CD14-positive monocyte (primary cell): ENCODE measurements at regions of chr1 and their contacts with region 1.

Region 1: GRCh38 chr1:111739194-111739924 is at the start of gene INKA2:
- DNase-seq: peak; percentile 80 to 86 (median 82)
- H3K4me3 ChIP-seq: peak within 1 kb of the TSS; percentile 46 to 79 (median 63)
- H3K4me3 Mint-ChIP-seq: peak within 1 kb of the TSS; percentile 89 to 98
- H3K27ac ChIP-seq: peak within 1 kb of the TSS; percentile 78 to 81
- H3K27ac Mint-ChIP-seq: peak within 1 kb of the TSS; percentile 83 to 99 (median 95)
- H3K4me1 ChIP-seq: peaks cover 58 to 62% of the 10 kb centered on the region in 2 donors
- H3K4me1 Mint-ChIP-seq: peaks cover 31% of the 10 kb centered on the region
- H3K27me3 ChIP-seq: peaks cover 22 to 54% of the 10 kb centered on the region in 2 donors
- H3K27me3 Mint-ChIP-seq: peaks cover 51 to 70% (median 54%) of the 10 kb centered on the region in 3 donors
- CTCF ChIP-seq: no peak
- polyA plus RNA-seq, gene INKA2: 1.8 to 6.6 (median 2.0) TPM

Region 2: DNA sequence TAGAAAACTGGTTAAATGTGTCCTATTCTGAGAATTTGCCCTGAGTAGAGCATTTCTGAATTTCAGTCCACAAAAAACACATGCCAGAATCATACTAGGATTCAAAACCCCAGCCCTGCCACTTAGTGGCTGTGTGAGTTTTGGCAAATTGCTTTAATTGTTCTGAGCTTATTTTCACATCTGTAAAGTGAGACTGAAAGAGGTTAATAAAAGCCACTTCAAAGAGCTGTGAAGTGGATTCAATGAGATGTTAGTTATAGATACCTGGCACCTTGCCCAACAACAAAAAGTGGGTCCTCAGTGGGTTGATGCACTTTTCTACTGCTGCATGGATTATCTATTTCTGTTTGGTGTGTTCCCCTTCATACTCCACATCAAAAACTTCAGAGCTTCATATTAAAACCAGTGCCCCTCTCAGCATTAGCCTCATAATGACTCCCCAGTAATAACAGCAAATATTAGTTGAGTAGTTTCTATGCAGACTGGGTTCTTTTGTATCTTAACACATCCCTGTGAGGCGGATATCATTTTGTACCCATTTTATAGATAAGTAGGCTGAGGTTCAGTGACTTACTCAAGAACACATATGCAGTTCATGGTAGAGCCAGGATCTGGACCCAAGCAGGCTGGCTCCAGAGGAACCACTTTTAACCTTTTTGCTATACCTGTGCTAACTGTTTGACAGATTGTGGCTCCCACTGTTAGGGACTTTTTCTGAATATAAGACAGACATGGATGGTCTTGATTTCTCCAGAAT is 221.7 kb before region 1 on chr1:
- intact Hi-C with region 1: no loop called
- DNase-seq: no peak
- H3K4me3 ChIP-seq: no peak overlapping the region
- H3K4me3 Mint-ChIP-seq: no peak overlapping the region
- H3K27ac ChIP-seq: no peak overlapping the region
- H3K27ac Mint-ChIP-seq: no peak overlapping the region
- H3K4me1 ChIP-seq: peaks cover 23 to 25% of the 10 kb centered on the region in 2 donors
- H3K4me1 Mint-ChIP-seq: peaks cover 29% of the 10 kb centered on the region
- H3K27me3 ChIP-seq: no peaks in the 10 kb centered on the region
- H3K27me3 Mint-ChIP-seq: peaks cover 0 to 5% (median 1%) of the 10 kb centered on the region in 3 donors
- CTCF ChIP-seq: no peak

Region 3: DNA sequence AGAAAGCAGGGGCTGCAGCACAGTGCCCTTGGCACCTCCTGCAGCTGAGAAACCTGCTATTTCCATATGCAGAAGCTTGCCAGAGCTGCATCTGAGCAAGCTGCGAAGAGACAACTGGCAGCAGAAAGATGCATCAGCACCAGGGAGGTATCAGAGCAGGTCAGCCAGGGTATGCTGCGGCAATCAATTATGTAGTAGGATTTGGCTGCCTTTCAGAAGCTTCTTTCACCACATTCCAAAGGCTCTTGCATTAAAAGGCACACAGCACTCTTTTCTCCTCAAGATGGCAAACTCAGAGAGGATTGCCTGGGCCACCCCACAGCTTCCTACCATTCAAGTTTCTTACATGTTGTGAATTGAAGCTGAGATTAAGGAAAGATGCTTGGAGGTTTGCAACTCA is 167.4 kb before region 1 on chr1:
- intact Hi-C with region 1: no loop called
- DNase-seq: no peak
- H3K4me3 ChIP-seq: no peak overlapping the region
- H3K4me3 Mint-ChIP-seq: no peak overlapping the region
- H3K27ac ChIP-seq: no peak overlapping the region
- H3K27ac Mint-ChIP-seq: peak overlapping the region in 1 of 7 donors; percentile 69
- H3K4me1 ChIP-seq: no peaks in the 10 kb centered on the region
- H3K4me1 Mint-ChIP-seq: no peaks in the 10 kb centered on the region
- H3K27me3 ChIP-seq: no peaks in the 10 kb centered on the region
- H3K27me3 Mint-ChIP-seq: peaks cover 0 to 1% (median 0%) of the 10 kb centered on the region in 3 donors
- CTCF ChIP-seq: no peak

Region 4: DNA sequence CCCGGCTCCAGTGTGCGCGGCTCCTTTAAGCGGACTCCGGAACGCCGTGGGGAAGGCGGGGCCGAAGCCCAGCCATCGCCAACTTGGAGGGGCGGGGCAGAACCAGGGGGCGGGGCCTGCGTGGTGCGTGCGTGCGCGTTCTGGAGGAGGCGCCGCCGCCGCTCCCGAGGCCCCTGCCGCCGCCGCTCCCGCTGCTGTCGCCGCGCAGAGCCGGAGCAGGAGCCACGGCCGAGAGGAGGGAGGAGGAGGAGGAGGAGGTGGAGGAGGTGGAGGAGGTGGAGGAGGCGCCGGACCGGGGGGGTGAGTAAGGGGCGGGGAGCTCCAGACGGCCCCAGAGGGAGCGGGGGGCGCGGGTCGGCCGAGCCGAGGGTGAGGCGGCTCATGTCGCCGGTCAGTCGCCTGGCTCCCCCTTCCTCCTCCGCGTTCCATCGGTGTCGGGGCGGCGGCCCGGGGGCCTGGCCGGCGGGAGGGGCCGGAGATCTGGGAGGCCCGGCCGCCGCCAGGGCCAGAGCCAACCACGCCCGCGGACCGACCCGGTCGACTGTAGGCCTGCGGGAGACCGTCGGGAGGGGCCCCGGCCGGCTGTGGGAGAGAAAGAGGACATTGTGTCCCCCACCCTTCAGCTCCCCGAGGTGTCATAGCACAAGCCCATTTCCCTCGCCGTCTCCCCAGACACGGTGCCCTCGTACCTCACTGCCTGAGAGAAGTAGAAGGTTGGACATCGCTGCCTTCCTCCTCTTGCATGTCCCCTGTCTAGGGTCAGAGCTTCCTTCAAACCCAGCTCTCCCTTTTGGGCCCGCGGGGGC is 119.5 kb before region 1 on chr1 and contains the start of gene RAP1A:
- intact Hi-C with region 1: loop called in 1 of 2 experiments (anchors 10 kb)
- DNase-seq: peak; percentile 82 to 86 (median 85)
- H3K4me3 ChIP-seq: peak within 1 kb of the TSS; percentile 65 to 89 (median 79)
- H3K4me3 Mint-ChIP-seq: peak within 1 kb of the TSS; percentile 79 to 96
- H3K27ac ChIP-seq: peak within 1 kb of the TSS; percentile 86 to 89
- H3K27ac Mint-ChIP-seq: peak within 1 kb of the TSS; percentile 93 to 98 (median 97)
- H3K4me1 ChIP-seq: peaks cover 58 to 70% of the 10 kb centered on the region in 2 donors
- H3K4me1 Mint-ChIP-seq: peaks cover 72% of the 10 kb centered on the region
- H3K27me3 ChIP-seq: no peaks in the 10 kb centered on the region
- H3K27me3 Mint-ChIP-seq: no peaks in the 10 kb centered on the region
- CTCF ChIP-seq: no peak
- polyA plus RNA-seq, gene RAP1A: 41.2 to 79.1 (median 75.3) TPM

Region 5: GRCh38 chr1:111725192-111725591 is 14.2 kb before region 1 on chr1:
- intact Hi-C with region 1: no loop called
- DNase-seq: no peak
- H3K4me3 ChIP-seq: no peak overlapping the region
- H3K4me3 Mint-ChIP-seq: no peak overlapping the region
- H3K27ac ChIP-seq: no peak overlapping the region
- H3K27ac Mint-ChIP-seq: no peak overlapping the region
- H3K4me1 ChIP-seq: peaks cover 5 to 18% of the 10 kb centered on the region in 2 donors
- H3K4me1 Mint-ChIP-seq: peaks cover 25% of the 10 kb centered on the region
- H3K27me3 ChIP-seq: no peaks in the 10 kb centered on the region
- H3K27me3 Mint-ChIP-seq: peaks cover 0 to 5% (median 1%) of the 10 kb centered on the region in 3 donors
- CTCF ChIP-seq: no peak

Region 6: GRCh38 chr1:111755331-111756123 is 16.2 kb after region 1 on chr1 and contains the start of gene DDX20:
- intact Hi-C with region 1: no loop called
- DNase-seq: peak; percentile 94 to 96 (median 96)
- H3K4me3 ChIP-seq: peak within 1 kb of the TSS; percentile 75 to 96 (median 85)
- H3K4me3 Mint-ChIP-seq: peak within 1 kb of the TSS; percentile 86 to 96
- H3K27ac ChIP-seq: peak within 1 kb of the TSS; percentile 88 to 98
- H3K27ac Mint-ChIP-seq: peak within 1 kb of the TSS; percentile 97 to 100 (median 99)
- H3K4me1 ChIP-seq: peaks cover 27 to 30% of the 10 kb centered on the region in 2 donors
- H3K4me1 Mint-ChIP-seq: peaks cover 35% of the 10 kb centered on the region
- H3K27me3 ChIP-seq: no peaks in the 10 kb centered on the region
- H3K27me3 Mint-ChIP-seq: peaks cover 0 to 2% (median 1%) of the 10 kb centered on the region in 3 donors
- CTCF ChIP-seq: peak; percentile 84
- polyA plus RNA-seq, gene DDX20: 3.1 to 4.1 (median 4.0) TPM